Right ventricle myocardium inferior (tissue), 1 donor: ENCODE measurements at regions of chr19 and their contacts with region 1.

Region 1: DNA sequence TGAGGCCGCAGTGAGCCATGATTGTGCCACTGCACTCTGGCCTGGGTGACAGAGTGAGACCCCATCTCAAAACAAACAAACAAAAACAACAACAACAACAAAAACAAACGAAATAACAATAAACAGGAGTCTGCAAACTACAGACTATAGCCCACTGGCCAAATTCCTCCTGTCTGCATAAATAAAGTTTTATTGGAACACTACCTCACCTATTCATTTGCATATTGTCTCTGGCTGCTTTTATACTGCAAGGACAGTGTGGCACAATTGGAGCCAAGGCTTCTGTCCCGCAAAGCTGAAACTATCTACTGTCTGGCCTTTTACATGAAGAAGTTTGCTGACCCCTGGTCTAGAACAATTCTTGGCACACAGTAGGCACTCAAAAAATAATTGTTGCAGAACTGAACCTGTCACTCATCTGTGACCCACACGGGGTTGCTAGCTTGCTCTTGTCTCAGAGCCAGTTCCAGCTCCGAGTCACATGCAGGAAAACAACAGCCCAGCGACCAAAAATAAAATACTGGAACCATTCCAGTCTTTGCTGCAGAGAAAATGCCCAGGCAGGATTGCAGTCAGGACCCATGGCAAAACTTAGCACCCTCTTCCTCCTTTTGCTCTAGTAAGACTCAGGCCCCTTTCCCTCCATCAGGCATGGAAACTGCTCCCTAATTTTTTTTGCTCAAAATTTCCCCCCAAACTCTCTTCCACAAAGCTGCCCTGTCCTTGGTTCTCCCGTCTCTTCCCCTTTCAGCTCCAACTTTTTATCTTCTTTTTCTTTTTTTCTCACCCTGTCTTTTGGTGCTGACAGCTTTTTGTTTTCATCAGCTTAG is 4.8 kb upstream of the MYH14 start:
- DNase-seq: no peak
- ATAC-seq: peak; percentile 41

Region 2: DNA sequence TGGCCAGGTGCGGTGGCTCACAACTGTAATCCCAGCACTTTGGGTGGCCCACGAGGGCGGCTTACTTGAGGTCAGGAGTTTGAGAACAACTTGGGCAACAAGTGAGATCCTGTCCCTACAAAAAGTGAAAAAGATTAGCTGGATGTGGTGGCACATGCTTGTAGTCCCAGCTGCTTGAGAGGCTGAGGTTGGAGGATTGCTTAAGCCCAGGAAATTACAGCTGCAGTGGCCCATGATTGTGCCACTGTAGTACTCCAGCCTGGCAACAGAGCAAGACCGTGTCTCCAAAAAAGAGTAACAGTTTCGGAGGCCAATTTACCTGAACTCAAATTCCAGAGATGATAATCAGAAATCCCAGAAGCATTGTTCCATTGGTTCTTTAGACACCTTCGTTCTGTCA is 168.4 kb before region 1 on chr19:
- intact Hi-C with region 1: no loop called
- DNase-seq: no peak
- ATAC-seq: no peak

Region 3: DNA sequence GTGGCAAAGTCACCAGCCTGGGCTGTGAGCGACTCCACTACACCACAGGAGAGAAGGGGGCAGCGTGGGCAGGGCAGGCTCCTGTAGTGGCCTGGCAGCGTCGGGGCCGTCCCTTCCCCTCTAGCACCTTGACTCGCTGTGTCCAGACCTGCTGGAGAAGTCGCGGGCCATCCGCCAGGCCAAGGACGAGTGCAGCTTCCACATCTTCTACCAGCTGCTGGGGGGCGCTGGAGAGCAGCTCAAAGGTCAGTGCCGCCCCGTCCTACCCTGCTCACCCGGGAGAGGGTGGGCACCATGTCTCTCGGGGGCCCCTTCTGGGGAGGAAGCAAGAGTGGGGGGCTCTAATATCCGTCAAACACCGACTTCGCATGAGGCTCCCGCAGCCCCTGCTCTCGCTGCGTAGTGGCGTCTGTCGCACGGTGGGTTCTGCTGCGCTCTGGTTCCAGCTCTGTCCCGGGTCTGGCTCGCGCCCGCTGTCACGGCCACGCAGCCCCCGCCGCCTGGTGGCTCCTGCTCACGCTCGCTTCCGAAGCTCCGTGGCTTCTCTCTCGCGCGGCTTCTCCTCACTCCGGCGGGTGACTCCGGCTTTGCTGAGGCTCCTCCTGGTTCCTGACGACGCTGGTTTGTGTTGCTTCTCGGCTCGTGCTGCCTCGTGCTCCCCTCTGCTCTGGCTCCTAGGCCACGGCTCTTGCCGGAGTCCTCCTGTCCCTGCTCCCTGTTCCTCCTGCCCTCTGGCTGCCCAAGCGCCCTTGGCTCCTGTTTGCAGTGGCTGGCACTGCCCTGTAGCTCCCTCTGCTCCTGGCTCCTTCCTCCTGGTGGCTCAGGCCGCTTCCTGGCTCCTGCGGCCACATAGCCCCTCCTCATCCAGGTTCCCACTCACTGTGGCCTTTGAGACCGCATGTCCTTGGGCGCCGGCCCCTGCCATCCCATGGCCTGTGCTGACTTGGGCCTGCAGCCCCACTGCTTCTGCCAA is 32.0 kb after region 1 on chr19:
- intact Hi-C with region 1: loop called (anchors 1 kb)
- DNase-seq: no peak
- ATAC-seq: peak; percentile 45